ENCODE measurements at regions of chr2 and their contacts with region 1.

Region 1: DNA sequence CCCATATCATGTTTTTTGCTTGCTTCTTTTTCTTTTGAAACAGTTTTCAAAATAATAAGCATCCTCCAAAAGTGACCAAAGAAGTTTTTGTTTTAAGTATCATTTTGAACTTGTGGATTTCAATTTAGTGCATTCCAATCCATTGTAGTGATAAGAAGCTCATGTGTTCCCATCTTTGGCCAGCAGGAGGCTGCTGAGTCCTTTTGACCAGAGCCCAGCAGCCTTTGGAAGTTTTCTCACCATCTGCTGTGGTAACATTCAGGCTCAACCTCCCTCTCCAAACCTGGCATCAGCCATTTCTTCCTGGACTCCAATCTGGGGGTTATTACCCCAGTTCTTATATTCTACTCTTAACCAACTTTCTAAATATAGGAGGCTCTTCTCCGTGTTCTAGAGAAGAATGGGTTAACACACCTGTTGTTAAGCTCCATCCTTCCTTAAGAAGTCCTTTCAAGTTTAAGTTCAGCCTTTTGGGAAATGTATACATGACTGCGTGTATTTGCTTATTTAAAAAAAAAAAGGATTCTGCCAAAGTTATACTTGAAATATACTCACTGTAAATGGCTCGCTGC is 39.0 kb upstream of the MAL start:
- DNase-seq: peak; percentile 54
- ATAC-seq: peak; percentile 93
- H3K4me3 ChIP-seq: no peak overlapping the region
- H3K27ac ChIP-seq: no peak overlapping the region
- H3K4me1 ChIP-seq: no peaks in the 10 kb centered on the region
- H3K27me3 ChIP-seq: peaks cover 24% of the 10 kb centered on the region; the same call in 1 of the 2 replicates
- CTCF ChIP-seq: peak; percentile 61 to 79 (median 77); a peak in 5 of 6 replicates
- POLR2A ChIP-seq: no peak
- RAD21 ChIP-seq: peak; percentile 62

Region 2: GRCh38 chr2:94879416-94879945 is 107.0 kb before region 1 on chr2:
- CTCF ChIA-PET with region 1: no interaction called
- POLR2A ChIA-PET with region 1: no interaction called
- RAD21 ChIA-PET with region 1: no interaction called
- intact Hi-C with region 1: no loop called
- DNase-seq: no peak
- ATAC-seq: no peak
- H3K4me3 ChIP-seq: no peak overlapping the region
- H3K27ac ChIP-seq: no peak overlapping the region
- H3K4me1 ChIP-seq: no peaks in the 10 kb centered on the region
- H3K27me3 ChIP-seq: peaks cover 7% of the 10 kb centered on the region; the same call in 1 of the 2 replicates
- CTCF ChIP-seq: no peak
- POLR2A ChIP-seq: no peak
- RAD21 ChIP-seq: no peak

Region 3: GRCh38 chr2:94956797-94957391 is 29.6 kb before region 1 on chr2:
- CTCF ChIA-PET with region 1: interaction called, 10 read pairs
- POLR2A ChIA-PET with region 1: no interaction called
- RAD21 ChIA-PET with region 1: no interaction called
- intact Hi-C with region 1: no loop called
- DNase-seq: peak; percentile 13
- ATAC-seq: peak; percentile 91
- H3K4me3 ChIP-seq: no peak overlapping the region
- H3K27ac ChIP-seq: no peak overlapping the region
- H3K4me1 ChIP-seq: no peaks in the 10 kb centered on the region
- H3K27me3 ChIP-seq: peaks cover 34% of the 10 kb centered on the region
- CTCF ChIP-seq: peak; percentile 77 to 83 (median 79)
- POLR2A ChIP-seq: no peak
- RAD21 ChIP-seq: peak; percentile 54

Region 4: GRCh38 chr2:94996305-94997100 is 10.0 kb after region 1 on chr2:
- CTCF ChIA-PET with region 1: interaction called, 10 read pairs
- POLR2A ChIA-PET with region 1: no interaction called
- RAD21 ChIA-PET with region 1: interaction called in 1 of 2 experiments, 3 read pairs
- intact Hi-C with region 1: no loop called
- DNase-seq: no peak
- ATAC-seq: no peak
- H3K4me3 ChIP-seq: no peak overlapping the region
- H3K27ac ChIP-seq: no peak overlapping the region
- H3K4me1 ChIP-seq: no peaks in the 10 kb centered on the region
- H3K27me3 ChIP-seq: no peaks in the 10 kb centered on the region
- CTCF ChIP-seq: no peak
- POLR2A ChIP-seq: no peak
- RAD21 ChIP-seq: no peak

Region 5: DNA sequence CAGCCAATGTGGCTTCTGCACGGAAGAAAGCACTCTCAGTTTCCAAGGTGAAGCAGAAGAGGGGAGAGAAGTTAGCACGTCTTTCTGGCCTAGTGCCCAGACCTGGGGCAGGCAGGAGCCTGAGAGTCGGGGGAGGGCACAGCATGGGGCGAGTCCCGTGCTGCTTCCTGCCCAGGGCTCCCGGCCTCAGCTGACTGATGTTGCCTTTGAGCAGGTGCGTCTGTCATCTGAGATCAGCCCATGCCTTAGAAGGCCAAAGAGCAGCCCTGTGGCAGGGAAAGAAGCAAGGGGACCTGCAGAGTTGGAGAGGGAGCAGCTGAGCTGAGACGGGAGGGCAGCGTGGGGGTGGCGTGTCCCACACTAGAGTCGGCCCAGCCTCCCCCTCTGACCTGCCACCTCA is 314.0 kb after region 1 on chr2:
- CTCF ChIA-PET with region 1: no interaction called
- POLR2A ChIA-PET with region 1: no interaction called
- RAD21 ChIA-PET with region 1: no interaction called
- intact Hi-C with region 1: no loop called
- DNase-seq: no peak
- ATAC-seq: peak; percentile 31; the same call in 1 of the 2 replicates
- H3K4me3 ChIP-seq: no peak overlapping the region
- H3K27ac ChIP-seq: no peak overlapping the region; the same call in 1 of the 2 replicates
- H3K4me1 ChIP-seq: peaks cover 0 to 8% of the 10 kb centered on the region in 2 experiments; a peak in 1 of 4 replicates
- H3K27me3 ChIP-seq: no peaks in the 10 kb centered on the region
- CTCF ChIP-seq: no peak
- POLR2A ChIP-seq: no peak
- RAD21 ChIP-seq: no peak

Measured in HCT116 (cell line).